ENCODE measurements at regions of chr7 and their contacts with region 1.

Region 1: DNA sequence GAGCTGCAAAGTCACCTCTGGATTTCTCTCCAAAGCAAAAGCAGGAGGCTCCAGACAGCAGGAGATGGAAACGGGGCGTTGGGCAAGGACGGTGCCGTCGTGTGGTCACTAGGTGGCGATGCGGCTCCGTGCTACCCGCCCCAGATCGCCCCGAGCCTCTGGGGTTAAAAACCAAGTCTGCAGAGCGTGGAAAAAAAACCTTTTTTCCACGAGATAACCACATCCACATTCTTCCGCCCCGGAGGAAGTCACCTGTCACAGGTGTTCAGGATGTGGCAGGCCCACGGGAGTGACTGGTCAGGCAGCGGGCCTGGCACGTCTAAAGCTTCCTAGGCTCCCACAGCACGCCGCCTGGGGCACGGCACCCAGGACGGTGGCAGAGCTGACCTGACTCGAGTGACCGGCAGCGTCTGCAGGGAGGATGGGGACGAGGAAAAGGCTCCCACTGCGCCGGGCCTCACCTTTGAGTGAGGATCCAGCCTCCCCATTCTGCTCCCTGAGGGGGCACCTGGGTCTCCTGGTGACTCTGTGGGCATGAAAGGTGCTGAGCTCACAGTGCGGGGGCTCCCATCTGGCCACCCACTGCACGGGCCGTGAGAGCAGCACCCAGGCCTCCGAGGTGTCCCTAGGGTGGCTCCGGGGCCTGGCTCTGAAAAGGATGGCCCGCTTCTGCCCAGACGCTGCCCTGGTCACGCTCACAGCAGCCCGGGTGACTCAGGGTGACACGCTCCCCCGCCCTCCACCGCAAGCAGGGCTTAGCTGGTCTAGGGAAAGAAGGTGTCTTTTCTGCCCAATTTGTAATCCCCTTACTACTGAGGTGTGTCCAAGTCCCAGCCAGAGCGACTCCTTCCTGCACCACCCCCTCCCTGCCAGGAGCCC is 71.3 kb upstream of the TNRC18 start:
- DNase-seq: peak; percentile 88
- ATAC-seq: peak; percentile 78
- H3K4me3 Mint-ChIP-seq: no peak overlapping the region
- H3K27ac Mint-ChIP-seq: no peak overlapping the region
- H3K4me1 Mint-ChIP-seq: peaks cover 17% of the 10 kb centered on the region
- H3K27me3 Mint-ChIP-seq: no peaks in the 10 kb centered on the region
- CTCF ChIP-seq: peak; percentile 57

Region 2: GRCh38 chr7:5363729-5364128 is 131.2 kb before region 1 on chr7:
- CTCF ChIA-PET with region 1: interaction called, 18 read pairs
- POLR2A ChIA-PET with region 1: no interaction called
- DNase-seq: no peak
- ATAC-seq: no peak
- H3K4me3 Mint-ChIP-seq: no peak overlapping the region
- H3K27ac Mint-ChIP-seq: no peak overlapping the region
- H3K4me1 Mint-ChIP-seq: no peaks in the 10 kb centered on the region
- H3K27me3 Mint-ChIP-seq: no peaks in the 10 kb centered on the region
- CTCF ChIP-seq: no peak

Region 3: DNA sequence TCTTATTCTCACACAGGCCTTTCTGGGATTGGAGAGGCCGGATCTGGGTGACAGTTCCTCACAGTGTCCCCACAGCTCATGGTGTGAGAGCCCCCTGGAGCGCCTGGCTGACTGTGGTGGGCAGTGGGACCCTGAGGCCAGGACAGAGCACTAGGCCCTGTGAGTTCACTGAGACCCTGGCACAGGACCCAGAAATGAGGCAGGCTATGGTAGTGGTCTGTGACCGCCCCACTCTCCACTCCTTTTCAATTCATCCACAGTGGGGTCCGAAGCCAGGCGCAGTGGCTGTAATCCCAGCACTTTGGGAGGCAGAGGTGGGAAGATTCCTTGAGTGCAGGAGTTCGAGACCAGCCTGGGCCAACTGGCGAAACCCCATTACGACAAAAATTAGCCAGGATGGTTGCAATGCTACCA is 24.6 kb after region 1 on chr7:
- CTCF ChIA-PET with region 1: interaction called, 19 read pairs
- POLR2A ChIA-PET with region 1: interaction called, 21 read pairs
- DNase-seq: no peak
- ATAC-seq: peak; percentile 7
- H3K4me3 Mint-ChIP-seq: no peak overlapping the region
- H3K27ac Mint-ChIP-seq: no peak overlapping the region
- H3K4me1 Mint-ChIP-seq: no peaks in the 10 kb centered on the region
- H3K27me3 Mint-ChIP-seq: no peaks in the 10 kb centered on the region; the same call in 1 of the 2 replicates
- CTCF ChIP-seq: no peak

Region 4: GRCh38 chr7:5557920-5558401 is 63.0 kb after region 1 on chr7:
- CTCF ChIA-PET with region 1: interaction called, 80 read pairs
- POLR2A ChIA-PET with region 1: no interaction called
- DNase-seq: no peak
- ATAC-seq: no peak
- H3K4me3 Mint-ChIP-seq: peak overlapping the region; percentile 63; the same call in 1 of the 2 replicates
- H3K27ac Mint-ChIP-seq: peak overlapping the region; percentile 87; the same call in 1 of the 2 replicates
- H3K4me1 Mint-ChIP-seq: peaks cover 25% of the 10 kb centered on the region
- H3K27me3 Mint-ChIP-seq: no peaks in the 10 kb centered on the region
- CTCF ChIP-seq: no peak

Region 5: GRCh38 chr7:5636914-5637313 is 142.0 kb after region 1 on chr7:
- CTCF ChIA-PET with region 1: interaction called, 16 read pairs
- POLR2A ChIA-PET with region 1: no interaction called
- DNase-seq: no peak
- ATAC-seq: peak; percentile 9; the same call in 1 of the 2 replicates
- H3K4me3 Mint-ChIP-seq: peak overlapping the region; percentile 6; the same call in 1 of the 2 replicates
- H3K27ac Mint-ChIP-seq: peak overlapping the region; percentile 83
- H3K4me1 Mint-ChIP-seq: peaks cover 57% of the 10 kb centered on the region
- H3K27me3 Mint-ChIP-seq: no peaks in the 10 kb centered on the region
- CTCF ChIP-seq: no peak

Region 6: GRCh38 chr7:5704534-5704922 is 209.6 kb after region 1 on chr7:
- CTCF ChIA-PET with region 1: interaction called, 20 read pairs
- POLR2A ChIA-PET with region 1: no interaction called
- DNase-seq: peak; percentile 75
- ATAC-seq: peak; percentile 85
- H3K4me3 Mint-ChIP-seq: no peak overlapping the region
- H3K27ac Mint-ChIP-seq: peak overlapping the region; percentile 60; the same call in 1 of the 2 replicates
- H3K4me1 Mint-ChIP-seq: peaks cover 6% of the 10 kb centered on the region
- H3K27me3 Mint-ChIP-seq: no peaks in the 10 kb centered on the region
- CTCF ChIP-seq: peak; percentile 64; the same call in 1 of the 2 replicates

Measured in WTC11 (cell line).